CD4-positive, alpha-beta T cell (primary cell): ENCODE measurements at regions of chr11 and their contacts with region 1.

Region 1: DNA sequence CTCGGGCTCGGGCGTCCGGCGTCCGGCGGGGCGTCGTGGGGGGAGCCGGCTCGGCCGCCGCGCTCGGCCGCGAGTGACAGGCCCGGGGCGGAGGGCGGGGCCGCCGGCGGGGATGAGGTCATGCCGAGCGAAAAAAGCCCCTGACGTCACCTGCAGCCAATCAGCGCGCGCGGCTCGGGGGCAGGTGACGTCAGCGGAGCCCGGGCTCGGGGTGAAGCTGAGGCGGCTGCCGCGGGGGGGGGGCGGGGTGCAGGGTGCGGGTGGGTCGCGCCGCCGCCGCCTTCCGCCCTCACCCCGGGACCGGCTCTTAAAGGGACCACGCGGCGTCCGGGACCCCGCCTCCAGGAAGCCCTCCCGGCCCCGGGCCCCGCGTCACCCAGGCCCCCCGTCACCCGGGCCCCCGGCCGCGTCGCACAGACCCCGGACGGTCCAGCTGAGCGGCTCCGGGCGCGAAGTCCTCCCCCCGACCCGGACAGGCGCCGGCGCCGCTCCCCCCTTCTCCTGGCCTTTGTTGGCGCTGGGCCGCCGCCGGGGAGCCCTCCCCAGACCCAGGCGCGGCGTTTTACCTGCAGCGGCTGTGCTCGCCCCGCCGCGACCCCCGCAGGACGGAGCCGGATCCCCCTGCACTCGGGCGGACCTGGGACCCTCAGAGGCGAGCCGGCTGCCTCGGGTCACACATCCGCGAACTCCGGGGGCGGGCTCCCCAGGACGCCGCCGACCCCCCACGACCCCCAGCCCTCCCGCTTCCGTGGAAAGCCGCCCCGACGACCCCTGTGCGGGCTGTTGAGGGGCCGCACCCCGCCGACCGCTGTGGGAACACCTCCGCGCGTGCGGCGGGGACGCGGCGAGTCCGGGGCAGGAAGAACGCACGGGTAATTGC is at the start of gene DUSP8:
- DNase-seq: peak; percentile 92 to 99 (median 94)
- ATAC-seq: peak; percentile 55
- H3K4me3 ChIP-seq: peak within 1 kb of the TSS; percentile 56
- H3K4me3 Mint-ChIP-seq: peak within 1 kb of the TSS; percentile 88
- H3K27ac ChIP-seq: peak within 1 kb of the TSS; percentile 80 to 82
- H3K27ac Mint-ChIP-seq: peak within 1 kb of the TSS; percentile 89
- H3K4me1 ChIP-seq: peaks cover 45% of the 10 kb centered on the region
- H3K4me1 Mint-ChIP-seq: peaks cover 24% of the 10 kb centered on the region
- H3K27me3 ChIP-seq: no peaks in the 10 kb centered on the region
- H3K27me3 Mint-ChIP-seq: no peaks in the 10 kb centered on the region
- CTCF ChIP-seq: no peak
- total RNA-seq, gene DUSP8: 83.9 to 91.2 TPM

Region 2: DNA sequence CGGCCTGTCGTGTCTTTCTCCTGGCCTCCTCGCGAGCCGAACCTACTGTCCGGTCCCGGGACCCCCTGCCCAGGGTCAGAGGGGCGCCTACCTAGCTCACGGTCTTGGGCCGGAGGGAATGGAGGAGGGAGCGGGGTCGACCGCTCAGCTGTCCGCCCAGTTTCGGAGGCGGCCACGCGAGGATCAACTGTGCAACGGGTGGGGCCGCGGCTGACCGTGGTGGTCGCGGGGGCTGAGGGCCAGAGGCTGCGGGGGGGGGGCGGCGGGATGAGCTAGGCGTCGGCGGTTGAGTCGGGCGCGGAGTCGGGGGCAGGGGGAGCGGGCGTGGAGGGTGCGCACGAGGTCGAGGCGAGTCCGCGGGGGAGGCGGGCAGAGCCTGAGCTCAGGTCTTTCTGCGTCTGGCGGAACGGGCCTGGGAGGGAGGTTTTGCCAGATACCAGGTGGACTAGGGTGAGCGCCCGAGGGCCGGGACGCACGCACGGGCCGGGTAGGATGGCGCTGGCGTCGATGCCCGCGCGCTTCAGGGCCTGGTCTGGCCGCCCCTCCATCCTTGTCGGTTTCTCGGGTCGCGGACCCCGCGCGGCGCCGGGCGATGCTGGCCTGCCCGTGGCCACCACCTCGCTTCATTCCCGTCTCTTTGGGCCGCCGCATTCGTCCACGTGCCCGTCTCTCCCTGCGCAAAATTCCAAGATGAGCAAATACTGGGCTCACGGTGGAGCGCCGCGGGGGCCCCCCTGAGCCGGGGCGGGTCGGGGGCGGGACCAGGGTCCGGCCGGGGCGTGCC is 935.8 kb before region 1 on chr11:
- CTCF ChIA-PET with region 1: no interaction called
- POLR2A ChIA-PET with region 1: no interaction called
- intact Hi-C with region 1: no loop called
- DNase-seq: no peak
- ATAC-seq: no peak
- H3K4me3 ChIP-seq: no peak overlapping the region
- H3K4me3 Mint-ChIP-seq: no peak overlapping the region
- H3K27ac ChIP-seq: no peak overlapping the region
- H3K27ac Mint-ChIP-seq: no peak overlapping the region
- H3K4me1 ChIP-seq: peaks cover 33% of the 10 kb centered on the region
- H3K4me1 Mint-ChIP-seq: peaks cover 12% of the 10 kb centered on the region
- H3K27me3 ChIP-seq: peaks cover 29 to 32% of the 10 kb centered on the region in 2 experiments
- H3K27me3 Mint-ChIP-seq: peaks cover 48% of the 10 kb centered on the region
- CTCF ChIP-seq: no peak

Region 3: DNA sequence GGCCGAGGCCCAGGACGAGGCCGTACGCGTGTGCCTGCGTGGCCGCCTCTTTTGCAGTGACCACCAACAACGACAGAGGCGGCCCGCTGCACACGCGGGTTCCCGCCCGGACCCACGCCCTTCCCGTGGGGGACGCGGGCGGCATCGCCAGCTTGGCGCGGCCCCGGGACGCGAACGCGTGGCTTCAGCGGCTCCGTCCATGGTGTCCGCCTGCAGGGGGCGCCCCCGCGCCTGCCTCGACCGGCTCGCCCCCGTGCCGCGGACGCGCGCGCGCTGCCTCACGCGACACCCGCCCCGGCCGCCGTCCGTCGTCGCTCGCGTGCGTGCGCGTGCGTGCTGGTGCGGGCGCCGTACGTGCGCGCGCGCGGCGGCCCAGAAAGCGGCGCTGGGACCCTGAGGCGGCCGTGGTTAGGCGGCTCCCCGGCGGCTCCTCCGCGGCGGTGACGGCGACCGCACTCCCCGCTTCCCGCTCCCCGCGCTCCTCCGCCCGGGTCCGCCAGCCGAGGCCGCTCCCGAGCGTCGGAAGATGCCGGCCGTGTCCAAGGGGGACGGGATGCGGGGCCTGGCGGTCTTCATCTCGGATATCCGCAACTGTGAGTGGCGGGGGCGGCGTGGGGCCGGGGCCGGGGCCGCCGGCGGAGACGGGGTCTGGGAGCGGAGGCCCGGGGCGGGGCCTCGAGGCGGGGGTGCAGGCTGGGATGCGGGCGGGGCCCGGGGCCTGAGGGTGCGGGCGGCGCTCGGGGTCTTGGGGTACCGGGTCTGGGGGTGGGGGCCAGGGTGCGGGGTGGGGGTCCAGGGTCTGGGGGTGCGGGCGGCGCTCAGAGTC is 646.7 kb before region 1 on chr11 and contains the start of gene AP2A2:
- CTCF ChIA-PET with region 1: no interaction called
- POLR2A ChIA-PET with region 1: no interaction called
- intact Hi-C with region 1: loop called in 1 of 2 experiments (anchors 2 kb)
- DNase-seq: peak; percentile 78 to 99 (median 90)
- ATAC-seq: peak; percentile 71
- H3K4me3 ChIP-seq: peak within 1 kb of the TSS; percentile 65
- H3K4me3 Mint-ChIP-seq: peak within 1 kb of the TSS; percentile 90
- H3K27ac ChIP-seq: peak within 1 kb of the TSS; percentile 62 to 73
- H3K27ac Mint-ChIP-seq: peak within 1 kb of the TSS; percentile 96
- H3K4me1 ChIP-seq: peaks cover 43% of the 10 kb centered on the region
- H3K4me1 Mint-ChIP-seq: peaks cover 33% of the 10 kb centered on the region
- H3K27me3 ChIP-seq: no peaks in the 10 kb centered on the region
- H3K27me3 Mint-ChIP-seq: no peaks in the 10 kb centered on the region
- CTCF ChIP-seq: peak; percentile 61
- total RNA-seq, gene AP2A2: 45.9 to 46.6 TPM

Region 4: GRCh38 chr11:1202776-1203504 is 369.5 kb before region 1 on chr11:
- CTCF ChIA-PET with region 1: interaction called, 12 read pairs
- POLR2A ChIA-PET with region 1: no interaction called
- intact Hi-C with region 1: loop called in 1 of 2 experiments (anchors 1 kb)
- DNase-seq: peak; percentile 39 to 81 (median 57)
- ATAC-seq: peak; percentile 88
- H3K4me3 ChIP-seq: no peak overlapping the region
- H3K4me3 Mint-ChIP-seq: no peak overlapping the region
- H3K27ac ChIP-seq: no peak overlapping the region
- H3K27ac Mint-ChIP-seq: no peak overlapping the region
- H3K4me1 ChIP-seq: peaks cover 8% of the 10 kb centered on the region
- H3K4me1 Mint-ChIP-seq: no peaks in the 10 kb centered on the region
- H3K27me3 ChIP-seq: peaks cover 0 to 3% of the 10 kb centered on the region in 2 experiments
- H3K27me3 Mint-ChIP-seq: no peaks in the 10 kb centered on the region
- CTCF ChIP-seq: peak; percentile 84

Region 5: DNA sequence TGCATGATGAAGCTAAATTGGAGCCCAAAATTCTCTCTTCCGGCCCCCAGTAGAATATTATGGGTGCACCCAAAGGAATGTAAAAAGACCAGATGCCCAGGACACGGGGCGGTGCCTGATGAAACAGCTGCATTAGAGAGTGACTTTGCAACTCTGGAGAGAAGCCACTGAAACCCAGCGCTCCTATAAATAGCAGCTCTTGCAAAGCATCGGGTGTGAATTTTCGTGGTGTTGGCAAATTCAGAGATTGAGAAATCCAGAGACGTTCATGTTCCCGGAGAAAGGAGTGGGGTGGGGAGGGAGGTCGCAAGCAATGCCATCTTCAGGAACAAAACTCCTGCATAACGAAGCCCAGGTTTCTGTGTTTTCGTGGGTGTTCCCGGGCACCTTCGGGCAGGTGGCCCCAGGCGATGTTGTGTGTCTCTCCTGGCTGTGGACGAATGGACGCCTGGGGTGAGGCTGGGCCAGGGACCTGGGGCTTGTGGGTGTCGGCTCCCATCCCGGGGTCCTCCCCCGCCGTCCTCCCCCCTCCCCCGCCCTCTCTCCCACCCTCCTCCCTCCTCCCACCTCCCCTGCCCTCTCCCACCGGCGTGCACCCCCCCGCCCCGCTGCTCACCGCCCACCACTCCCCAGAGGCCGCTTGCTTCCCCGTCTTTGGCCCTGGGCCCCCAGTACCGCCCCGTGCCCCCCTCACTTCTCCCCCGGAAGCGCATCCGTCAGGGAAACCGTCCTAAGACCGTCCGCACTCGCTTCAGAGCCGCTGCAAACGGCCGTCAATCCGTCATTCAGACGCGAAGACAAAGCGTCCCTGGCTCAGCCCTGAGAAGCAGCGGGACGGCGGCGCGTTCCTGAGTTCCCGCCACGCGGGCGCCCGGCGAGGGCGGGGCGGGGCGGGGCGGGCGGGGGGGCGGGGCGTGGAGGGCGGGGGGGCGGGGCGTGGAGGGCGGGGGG is 236.4 kb before region 1 on chr11:
- CTCF ChIA-PET with region 1: no interaction called
- POLR2A ChIA-PET with region 1: no interaction called
- intact Hi-C with region 1: loop called in 1 of 2 experiments (anchors 5 kb)
- DNase-seq: peak in 13 of 14 experiments; percentile 32 to 85 (median 59)
- ATAC-seq: peak; percentile 56
- H3K4me3 ChIP-seq: peak overlapping the region; percentile 59
- H3K4me3 Mint-ChIP-seq: peak overlapping the region; percentile 93
- H3K27ac ChIP-seq: no peak overlapping the region
- H3K27ac Mint-ChIP-seq: peak overlapping the region; percentile 85
- H3K4me1 ChIP-seq: peaks cover 14% of the 10 kb centered on the region
- H3K4me1 Mint-ChIP-seq: peaks cover 22% of the 10 kb centered on the region
- H3K27me3 ChIP-seq: no peaks in the 10 kb centered on the region
- H3K27me3 Mint-ChIP-seq: no peaks in the 10 kb centered on the region
- CTCF ChIP-seq: no peak

Region 6: GRCh38 chr11:1453611-1454034 is 118.8 kb before region 1 on chr11:
- CTCF ChIA-PET with region 1: interaction called, 6 read pairs
- POLR2A ChIA-PET with region 1: no interaction called
- intact Hi-C with region 1: loop called (anchors 1 to 5 kb)
- DNase-seq: peak in 7 of 14 experiments; percentile 18 to 71 (median 49)
- ATAC-seq: peak; percentile 99
- H3K4me3 ChIP-seq: no peak overlapping the region
- H3K4me3 Mint-ChIP-seq: no peak overlapping the region
- H3K27ac ChIP-seq: no peak overlapping the region
- H3K27ac Mint-ChIP-seq: no peak overlapping the region
- H3K4me1 ChIP-seq: peaks cover 15% of the 10 kb centered on the region
- H3K4me1 Mint-ChIP-seq: no peaks in the 10 kb centered on the region
- H3K27me3 ChIP-seq: no peaks in the 10 kb centered on the region
- H3K27me3 Mint-ChIP-seq: no peaks in the 10 kb centered on the region
- CTCF ChIP-seq: peak; percentile 61

Region 7: DNA sequence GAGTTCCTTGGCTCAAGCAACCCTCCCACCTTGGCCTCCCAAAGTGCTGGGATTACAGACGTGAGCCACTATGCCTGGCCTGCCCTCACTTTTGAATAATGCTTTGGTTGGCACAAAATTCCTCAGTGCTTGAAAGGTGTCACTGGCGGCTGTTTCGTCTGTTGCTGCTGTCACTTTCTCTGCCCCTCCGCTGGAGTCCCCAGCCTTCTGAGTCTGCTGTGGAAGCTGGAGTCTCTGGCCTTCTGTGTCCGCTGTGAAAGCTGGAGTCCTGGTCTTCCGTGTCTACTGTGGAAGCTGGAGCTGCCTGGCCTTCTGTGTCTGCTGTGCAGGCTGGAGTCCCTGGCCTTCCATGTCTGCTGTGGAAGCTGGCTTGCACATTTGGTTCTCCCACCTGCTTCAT is 17.6 kb after region 1 on chr11:
- CTCF ChIA-PET with region 1: interaction called, 22 read pairs
- POLR2A ChIA-PET with region 1: interaction called, 34 read pairs
- intact Hi-C with region 1: no loop called
- DNase-seq: no peak
- ATAC-seq: no peak
- H3K4me3 ChIP-seq: no peak overlapping the region
- H3K4me3 Mint-ChIP-seq: no peak overlapping the region
- H3K27ac ChIP-seq: no peak overlapping the region
- H3K27ac Mint-ChIP-seq: peak overlapping the region; percentile 27
- H3K4me1 ChIP-seq: peaks cover 39% of the 10 kb centered on the region
- H3K4me1 Mint-ChIP-seq: peaks cover 17% of the 10 kb centered on the region
- H3K27me3 ChIP-seq: peaks cover 0 to 2% of the 10 kb centered on the region in 2 experiments
- H3K27me3 Mint-ChIP-seq: peaks cover 14% of the 10 kb centered on the region
- CTCF ChIP-seq: no peak

Region 8: GRCh38 chr11:1763796-1764661 is 191.6 kb after region 1 on chr11 and contains the start of gene CTSD:
- CTCF ChIA-PET with region 1: no interaction called
- POLR2A ChIA-PET with region 1: no interaction called
- intact Hi-C with region 1: loop called in 1 of 2 experiments (anchors 10 kb)
- DNase-seq: peak; percentile 66 to 92 (median 86)
- ATAC-seq: peak; percentile 86
- H3K4me3 ChIP-seq: peak within 1 kb of the TSS; percentile 72
- H3K4me3 Mint-ChIP-seq: peak within 1 kb of the TSS; percentile 95
- H3K27ac ChIP-seq: peak within 1 kb of the TSS; percentile 55 to 65
- H3K27ac Mint-ChIP-seq: peak within 1 kb of the TSS; percentile 81
- H3K4me1 ChIP-seq: peaks cover 54% of the 10 kb centered on the region
- H3K4me1 Mint-ChIP-seq: peaks cover 29% of the 10 kb centered on the region
- H3K27me3 ChIP-seq: peaks cover 0 to 2% of the 10 kb centered on the region in 2 experiments
- H3K27me3 Mint-ChIP-seq: no peaks in the 10 kb centered on the region
- CTCF ChIP-seq: no peak
- total RNA-seq, gene CTSD: 63.3 to 71.3 TPM